Caco-2 (cell line): ENCODE measurements at regions of chr16 and their contacts with region 1.

Region 1: GRCh38 chr16:5502467-5502869 is 404.9 kb upstream of the EEF2KMT start:
- DNase-seq: peak; percentile 34 to 48
- H3K4me3 ChIP-seq: no peak overlapping the region
- H3K4me3 Mint-ChIP-seq: no peak overlapping the region
- H3K27ac Mint-ChIP-seq: no peak overlapping the region
- H3K4me1 ChIP-seq: no peaks in the 10 kb centered on the region
- H3K4me1 Mint-ChIP-seq: no peaks in the 10 kb centered on the region
- H3K27me3 ChIP-seq: no peaks in the 10 kb centered on the region
- H3K27me3 Mint-ChIP-seq: peaks cover 13% of the 10 kb centered on the region
- CTCF ChIP-seq: peak; percentile 23 to 64

Region 2: DNA sequence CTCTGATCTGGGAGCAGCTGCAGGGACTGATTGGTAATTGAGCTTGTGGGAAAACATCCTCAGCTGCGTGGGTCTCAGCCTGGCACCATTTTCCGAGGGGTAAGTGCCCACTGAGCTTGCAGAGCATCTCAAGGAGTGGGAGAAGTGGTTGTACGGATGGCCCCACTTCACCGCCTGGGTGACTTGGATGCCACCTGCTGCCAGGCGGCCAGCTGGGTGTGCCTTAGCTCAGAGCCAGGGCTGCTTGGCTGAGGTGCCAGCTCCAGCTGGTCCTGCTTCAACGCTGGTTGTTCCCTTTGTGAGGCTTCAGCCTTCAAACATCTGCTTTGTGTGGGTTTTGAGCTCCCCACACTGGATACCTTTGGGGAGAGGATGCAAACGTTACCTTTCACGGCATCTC is 77.8 kb after region 1 on chr16:
- CTCF ChIA-PET with region 1: no interaction called
- POLR2A ChIA-PET with region 1: no interaction called
- intact Hi-C with region 1: no loop called
- DNase-seq: no peak
- H3K4me3 ChIP-seq: no peak overlapping the region
- H3K4me3 Mint-ChIP-seq: no peak overlapping the region
- H3K27ac Mint-ChIP-seq: no peak overlapping the region
- H3K4me1 ChIP-seq: no peaks in the 10 kb centered on the region
- H3K4me1 Mint-ChIP-seq: no peaks in the 10 kb centered on the region
- H3K27me3 ChIP-seq: no peaks in the 10 kb centered on the region
- H3K27me3 Mint-ChIP-seq: peaks cover 20% of the 10 kb centered on the region
- CTCF ChIP-seq: no peak

Region 3: GRCh38 chr16:5615868-5616642 is 113.6 kb after region 1 on chr16:
- CTCF ChIA-PET with region 1: no interaction called
- POLR2A ChIA-PET with region 1: no interaction called
- intact Hi-C with region 1: loop called (anchors 5 kb)
- DNase-seq: peak; percentile 55 to 60
- H3K4me3 ChIP-seq: no peak overlapping the region
- H3K4me3 Mint-ChIP-seq: no peak overlapping the region
- H3K27ac Mint-ChIP-seq: no peak overlapping the region
- H3K4me1 ChIP-seq: no peaks in the 10 kb centered on the region
- H3K4me1 Mint-ChIP-seq: no peaks in the 10 kb centered on the region
- H3K27me3 ChIP-seq: no peaks in the 10 kb centered on the region
- H3K27me3 Mint-ChIP-seq: peaks cover 11% of the 10 kb centered on the region
- CTCF ChIP-seq: peak; percentile 65 to 68

Region 4: GRCh38 chr16:6643080-6643686 is 1140.7 kb after region 1 on chr16:
- CTCF ChIA-PET with region 1: no interaction called
- POLR2A ChIA-PET with region 1: no interaction called
- intact Hi-C with region 1: loop called (anchors 10 kb)
- DNase-seq: peak; percentile 39 to 53
- H3K4me3 ChIP-seq: no peak overlapping the region
- H3K4me3 Mint-ChIP-seq: no peak overlapping the region
- H3K27ac Mint-ChIP-seq: no peak overlapping the region
- H3K4me1 ChIP-seq: no peaks in the 10 kb centered on the region
- H3K4me1 Mint-ChIP-seq: no peaks in the 10 kb centered on the region
- H3K27me3 ChIP-seq: no peaks in the 10 kb centered on the region
- H3K27me3 Mint-ChIP-seq: peaks cover 2% of the 10 kb centered on the region
- CTCF ChIP-seq: peak; percentile 62 to 80